Activated naive CD4-positive, alpha-beta T cell treated with anti-CD3 and anti-CD28 coated beads, Interleukin-2, amount 10 ng/mL, durations not matched to agents 7 days and 5 days (primary cell): ENCODE measurements at regions of chr11 and their contacts with region 1.

Region 1: GRCh38 chr11:75802913-75803820 is 11.8 kb upstream of the UVRAG start:
- DNase-seq: peak; percentile 84
- H3K4me3 Mint-ChIP-seq: no peak overlapping the region
- H3K27ac Mint-ChIP-seq: no peak overlapping the region
- H3K4me1 Mint-ChIP-seq: peaks cover 20% of the 10 kb centered on the region
- H3K27me3 Mint-ChIP-seq: peaks cover 4% of the 10 kb centered on the region

Region 2: DNA sequence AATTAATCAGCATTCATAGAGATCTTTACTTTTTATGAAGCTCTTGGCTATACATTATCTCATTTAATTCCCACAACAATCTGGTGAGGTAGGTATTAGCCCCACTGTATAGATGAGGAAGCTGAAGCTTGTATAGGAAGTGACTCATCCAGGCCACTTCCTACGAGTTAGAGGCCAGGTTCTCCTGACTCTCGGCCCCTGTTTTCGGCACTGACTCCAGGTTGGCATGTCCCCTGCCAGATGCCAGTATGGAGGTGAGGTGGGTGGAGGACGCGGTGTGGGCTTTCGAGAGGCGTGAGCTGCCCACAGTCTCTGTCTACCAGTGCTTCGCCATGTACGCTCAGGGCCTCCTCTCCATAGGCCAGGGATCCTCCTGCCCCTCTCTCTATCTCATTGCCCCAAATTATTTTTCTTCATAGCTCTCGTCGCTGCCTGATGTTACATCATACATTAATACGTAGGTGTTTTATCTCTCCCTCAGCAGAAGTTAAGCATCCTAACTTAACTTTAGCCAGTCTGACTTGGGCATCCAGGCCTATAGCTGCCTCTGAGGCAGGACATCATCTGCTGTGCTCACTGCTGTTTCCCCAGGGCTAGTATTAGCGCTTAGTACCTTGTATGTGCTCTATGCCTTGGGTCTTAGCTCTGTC is 25.6 kb before region 1 on chr11:
- CTCF ChIA-PET with region 1: interaction called, 12 read pairs
- DNase-seq: no peak
- H3K4me3 Mint-ChIP-seq: no peak overlapping the region
- H3K27ac Mint-ChIP-seq: no peak overlapping the region
- H3K4me1 Mint-ChIP-seq: peaks cover 31% of the 10 kb centered on the region
- H3K27me3 Mint-ChIP-seq: no peaks in the 10 kb centered on the region

Region 3: DNA sequence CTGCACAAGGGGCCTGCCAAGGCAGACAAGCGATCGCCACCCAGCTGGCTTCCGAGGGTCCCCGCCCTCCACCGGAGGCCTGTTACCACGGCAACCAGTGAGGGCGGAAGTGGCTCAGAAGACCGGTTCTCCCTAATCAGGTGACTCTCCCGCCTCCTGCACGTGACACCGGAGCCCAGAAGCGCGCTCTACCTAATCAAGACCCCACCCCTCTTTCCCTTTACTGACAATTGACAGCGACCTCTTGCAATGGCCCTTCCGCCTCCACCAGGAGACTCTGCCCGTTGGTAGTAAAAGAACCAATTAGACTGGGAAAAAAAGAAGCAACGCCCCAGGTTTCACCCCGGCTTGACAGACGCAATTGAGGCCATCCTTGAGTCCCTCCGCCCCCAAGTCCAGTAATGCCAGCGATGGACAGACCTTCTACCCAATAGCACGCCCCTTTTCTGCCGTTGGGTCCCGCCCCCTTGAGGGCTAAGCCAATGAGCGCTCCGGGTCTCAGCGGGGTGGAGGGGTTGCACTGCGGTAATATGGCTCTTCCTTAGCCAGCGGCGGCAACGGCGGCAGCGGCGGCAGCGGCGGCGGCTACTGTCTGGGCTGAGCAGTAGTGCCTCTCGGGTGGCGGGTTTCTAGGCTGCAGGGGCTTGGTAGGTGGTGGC is 11.6 kb after region 1 on chr11 and contains the start of gene UVRAG:
- CTCF ChIA-PET with region 1: interaction called, 47 read pairs
- DNase-seq: peak; percentile 99
- H3K4me3 Mint-ChIP-seq: no peak within 1 kb of the TSS
- H3K27ac Mint-ChIP-seq: peak within 1 kb of the TSS; percentile 95
- H3K4me1 Mint-ChIP-seq: peaks cover 21% of the 10 kb centered on the region
- H3K27me3 Mint-ChIP-seq: peaks cover 16% of the 10 kb centered on the region

Region 4: DNA sequence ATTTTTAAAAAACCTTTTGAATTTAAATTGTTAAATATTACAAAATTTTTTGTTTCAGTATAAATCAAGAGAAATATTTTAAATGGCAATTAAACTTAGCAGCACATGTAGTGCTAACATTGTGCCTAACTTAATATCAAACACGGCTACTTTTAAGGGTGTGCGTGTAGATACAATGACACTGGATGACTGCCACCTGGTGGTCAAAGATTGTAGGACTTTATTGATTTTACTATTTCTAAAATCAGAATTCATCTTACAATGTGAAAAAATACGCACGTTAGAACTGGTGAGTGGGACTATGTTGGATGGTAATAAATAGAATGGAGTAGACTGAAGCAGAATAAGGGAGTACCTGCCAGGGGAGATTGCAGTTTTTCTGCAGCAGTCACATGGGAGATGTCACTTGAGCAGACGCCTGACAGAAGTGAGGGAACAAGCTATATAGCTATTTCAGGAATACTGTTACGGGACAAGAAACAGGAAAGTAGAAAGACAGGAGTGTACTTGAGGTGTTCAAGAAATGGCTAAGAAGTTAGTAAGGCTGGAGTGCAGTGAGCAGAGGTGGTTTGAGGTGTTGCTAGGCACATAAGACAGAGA is 64.7 kb after region 1 on chr11:
- CTCF ChIA-PET with region 1: interaction called, 133 read pairs
- DNase-seq: peak; percentile 56
- H3K4me3 Mint-ChIP-seq: no peak overlapping the region
- H3K27ac Mint-ChIP-seq: no peak overlapping the region
- H3K4me1 Mint-ChIP-seq: peaks cover 4% of the 10 kb centered on the region
- H3K27me3 Mint-ChIP-seq: no peaks in the 10 kb centered on the region

Region 5: DNA sequence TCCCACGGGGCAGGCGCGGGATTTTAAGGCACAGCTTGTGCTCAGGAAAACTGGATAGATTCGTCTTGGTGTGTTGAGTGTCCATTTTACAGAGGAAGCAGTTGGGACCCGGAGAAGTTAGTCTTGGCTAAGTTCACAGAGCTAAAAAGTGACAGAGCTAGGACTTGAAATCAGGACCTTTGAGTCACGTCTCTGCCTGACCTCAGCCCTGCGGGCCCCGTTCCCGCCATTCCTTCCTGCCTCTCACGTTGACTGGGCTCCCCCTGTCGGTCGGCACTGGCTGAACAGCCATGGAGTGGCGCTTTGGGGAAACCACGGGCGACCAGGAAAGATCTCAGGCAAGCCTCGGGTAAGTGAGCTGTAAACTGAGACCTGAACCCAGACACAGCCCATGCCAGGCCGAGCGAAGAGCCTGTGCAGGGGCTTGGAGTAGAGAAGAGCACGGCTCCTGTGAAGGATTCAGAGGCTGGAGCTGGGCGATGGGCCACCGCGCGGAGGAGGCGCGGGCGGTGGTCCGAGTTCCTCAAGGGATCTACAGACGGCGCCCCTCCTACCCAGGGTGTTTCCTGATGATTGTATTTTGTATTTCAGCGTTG is 349.0 kb after region 1 on chr11:
- CTCF ChIA-PET with region 1: interaction called, 16 read pairs
- DNase-seq: peak; percentile 88
- H3K4me3 Mint-ChIP-seq: peak overlapping the region; percentile 45
- H3K27ac Mint-ChIP-seq: no peak overlapping the region
- H3K4me1 Mint-ChIP-seq: peaks cover 24% of the 10 kb centered on the region
- H3K27me3 Mint-ChIP-seq: peaks cover 64% of the 10 kb centered on the region